ENCODE measurements at regions of chr21 and their contacts with region 1.

Region 1: GRCh38 chr21:33491373-33492102 is at the start of gene DNAJC28:
- DNase-seq: peak; percentile 95
- H3K4me3 Mint-ChIP-seq: peak within 1 kb of the TSS; percentile 85
- H3K27ac Mint-ChIP-seq: peak within 1 kb of the TSS; percentile 81
- H3K4me1 Mint-ChIP-seq: peaks cover 9% of the 10 kb centered on the region
- H3K27me3 Mint-ChIP-seq: no peaks in the 10 kb centered on the region
- total RNA-seq, gene DNAJC28: 0.67 to 0.75 TPM

Region 2: GRCh38 chr21:33522953-33523349 is 31.4 kb after region 1 on chr21:
- CTCF ChIA-PET with region 1: no interaction called
- POLR2A ChIA-PET with region 1: no interaction called
- intact Hi-C with region 1: no loop called
- DNase-seq: no peak
- H3K4me3 Mint-ChIP-seq: no peak overlapping the region
- H3K27ac Mint-ChIP-seq: no peak overlapping the region
- H3K4me1 Mint-ChIP-seq: no peaks in the 10 kb centered on the region
- H3K27me3 Mint-ChIP-seq: no peaks in the 10 kb centered on the region

Region 3: DNA sequence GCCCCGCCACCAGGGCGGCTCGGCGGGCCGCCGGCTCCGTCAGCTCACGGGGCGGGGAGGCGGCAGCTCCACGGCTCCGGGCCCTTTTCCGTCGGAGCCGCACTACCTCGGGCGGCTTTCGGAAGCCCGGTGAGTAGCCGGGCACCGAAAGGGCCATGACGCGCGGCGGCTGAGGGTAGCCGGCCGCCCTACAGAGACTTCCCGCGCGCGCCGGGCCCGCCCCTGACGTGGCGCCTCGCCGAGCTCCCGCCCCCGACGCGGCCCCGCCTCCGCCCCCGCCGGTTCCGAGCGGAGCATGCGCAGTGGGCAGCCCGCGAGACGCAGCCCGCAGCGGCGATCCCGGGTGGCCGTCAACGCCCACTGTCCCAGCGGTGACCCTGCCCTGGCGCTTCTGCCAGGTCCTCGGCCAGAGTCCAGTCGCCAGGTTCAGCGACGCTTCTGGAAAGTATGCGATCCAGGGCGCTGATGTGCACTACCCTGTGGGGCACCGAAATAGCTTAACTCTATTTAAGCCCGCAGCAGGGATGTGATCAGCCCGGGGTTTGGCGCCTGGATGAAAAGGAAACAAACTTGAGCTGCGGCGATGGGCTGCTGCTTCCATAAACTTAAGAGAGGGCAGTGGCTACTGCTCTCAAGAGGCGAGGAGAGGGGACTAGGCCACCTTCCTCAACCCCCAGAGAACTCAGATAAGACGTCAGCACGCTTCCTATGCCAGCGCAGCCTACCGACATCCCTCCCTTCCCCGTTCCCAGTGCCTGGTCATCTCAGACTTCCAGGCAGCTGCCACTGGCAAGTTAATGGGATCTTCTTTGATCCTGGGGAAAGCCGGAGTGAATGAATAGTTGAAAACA is 97.2 kb after region 1 on chr21 and contains the start of gene DONSON:
- CTCF ChIA-PET with region 1: no interaction called
- POLR2A ChIA-PET with region 1: no interaction called
- intact Hi-C with region 1: loop called (anchors 1 kb)
- DNase-seq: peak; percentile 90
- H3K4me3 Mint-ChIP-seq: peak within 1 kb of the TSS; percentile 92
- H3K27ac Mint-ChIP-seq: peak within 1 kb of the TSS; percentile 72
- H3K4me1 Mint-ChIP-seq: peaks cover 21% of the 10 kb centered on the region
- H3K27me3 Mint-ChIP-seq: no peaks in the 10 kb centered on the region
- total RNA-seq, gene DONSON: 38.2 to 39.0 TPM

Region 4: GRCh38 chr21:34046917-34047316 is 555.4 kb after region 1 on chr21:
- CTCF ChIA-PET with region 1: no interaction called
- POLR2A ChIA-PET with region 1: no interaction called
- intact Hi-C with region 1: no loop called
- DNase-seq: no peak
- H3K4me3 Mint-ChIP-seq: no peak overlapping the region
- H3K27ac Mint-ChIP-seq: no peak overlapping the region
- H3K4me1 Mint-ChIP-seq: peaks cover 9% of the 10 kb centered on the region
- H3K27me3 Mint-ChIP-seq: peaks cover 2% of the 10 kb centered on the region